Activated CD4-positive, alpha-beta T cell treated with anti-CD3 and anti-CD28 coated beads for 36 hours (primary cell): ENCODE measurements at regions of chr1 and their contacts with region 1.

Region 1: DNA sequence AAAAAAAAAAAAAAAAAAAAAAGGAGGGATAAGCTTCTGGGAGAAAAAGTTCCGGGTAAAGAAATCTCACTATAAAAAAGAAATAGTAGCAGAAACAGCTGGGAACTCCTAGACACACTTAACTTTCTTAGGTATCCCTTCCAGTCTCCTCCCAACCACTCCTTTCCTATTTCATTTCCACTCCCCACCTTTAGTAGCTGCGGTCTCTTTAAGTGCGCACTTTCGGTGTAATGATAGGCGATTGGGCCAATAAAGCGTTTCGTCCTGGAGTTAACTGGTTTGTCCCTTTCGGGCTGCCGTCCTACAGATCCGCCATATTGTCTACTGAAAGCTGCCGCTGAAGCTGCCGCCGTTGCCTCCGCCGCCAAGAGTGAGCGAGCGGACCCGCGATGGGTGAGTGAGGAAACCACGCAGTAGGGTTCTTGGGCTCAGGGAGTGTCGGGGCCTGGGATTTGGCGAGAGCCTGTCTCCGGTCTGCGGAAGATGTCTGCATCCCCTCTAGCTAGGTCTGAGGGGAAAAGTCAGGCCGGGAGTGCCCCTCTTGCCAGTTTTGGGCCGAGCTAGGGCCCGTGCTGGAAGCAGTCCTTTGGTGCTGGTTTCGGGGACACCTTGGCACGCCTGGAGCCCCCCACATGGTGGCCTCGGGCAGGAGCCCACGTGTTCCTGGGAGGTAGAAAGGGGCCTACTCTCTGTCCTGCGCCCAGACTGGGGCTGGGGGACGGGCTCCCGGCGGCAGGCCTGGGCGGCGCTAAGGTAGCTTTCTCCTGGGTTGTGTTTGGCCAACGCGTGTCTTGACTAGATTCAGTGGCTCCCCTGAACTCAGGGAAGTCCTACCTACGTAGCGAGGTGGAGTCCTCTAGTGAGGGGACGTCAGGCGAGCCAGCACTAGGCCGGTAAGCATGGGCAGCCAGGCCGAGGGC is at the start of gene KPNA6:
- DNase-seq: peak; percentile 94
- ATAC-seq: peak; percentile 77
- H3K4me3 Mint-ChIP-seq: peak within 1 kb of the TSS; percentile 88
- H3K27ac Mint-ChIP-seq: peak within 1 kb of the TSS; percentile 96
- H3K4me1 Mint-ChIP-seq: peaks cover 39% of the 10 kb centered on the region
- H3K27me3 Mint-ChIP-seq: no peaks in the 10 kb centered on the region
- total RNA-seq, gene KPNA6: 70.0 to 78.3 TPM

Region 2: DNA sequence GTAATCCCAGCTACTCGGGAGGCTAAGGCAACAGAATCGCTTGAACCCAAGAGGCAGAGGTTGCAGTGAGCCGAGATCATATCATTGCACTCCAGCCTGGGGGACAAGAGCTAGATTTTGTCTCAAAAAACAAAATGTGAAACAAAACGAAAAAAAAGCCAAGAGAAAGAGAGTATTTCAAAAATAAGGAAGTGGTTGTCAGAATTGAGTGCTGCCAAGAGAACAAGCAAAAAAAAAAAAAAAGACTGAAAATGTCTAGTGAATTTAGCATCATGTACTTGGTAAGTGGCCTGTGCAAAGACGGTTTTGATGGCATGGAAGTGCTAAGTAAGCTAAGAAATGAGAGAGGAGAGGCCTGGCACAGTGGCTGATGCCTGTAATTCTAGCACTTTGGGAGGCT is 14.1 kb after region 1 on chr1:
- CTCF ChIA-PET with region 1: interaction called, 62 read pairs
- POLR2A ChIA-PET with region 1: interaction called, 6 read pairs
- intact Hi-C with region 1: no loop called
- DNase-seq: no peak
- ATAC-seq: no peak
- H3K4me3 Mint-ChIP-seq: no peak overlapping the region
- H3K27ac Mint-ChIP-seq: peak overlapping the region; percentile 65
- H3K4me1 Mint-ChIP-seq: peaks cover 46% of the 10 kb centered on the region
- H3K27me3 Mint-ChIP-seq: no peaks in the 10 kb centered on the region

Region 3: GRCh38 chr1:32179443-32180185 is 71.6 kb after region 1 on chr1 and contains the start of gene TXLNA:
- CTCF ChIA-PET with region 1: interaction called, 16 read pairs
- POLR2A ChIA-PET with region 1: interaction called, 5 read pairs
- intact Hi-C with region 1: loop called (anchors 1 to 2 kb)
- DNase-seq: peak; percentile 96
- ATAC-seq: peak; percentile 93
- H3K4me3 Mint-ChIP-seq: peak within 1 kb of the TSS; percentile 86
- H3K27ac Mint-ChIP-seq: peak within 1 kb of the TSS; percentile 98
- H3K4me1 Mint-ChIP-seq: peaks cover 44% of the 10 kb centered on the region
- H3K27me3 Mint-ChIP-seq: no peaks in the 10 kb centered on the region
- total RNA-seq, gene TXLNA: 79.5 to 79.7 TPM

Region 4: GRCh38 chr1:32291708-32292492 is 183.9 kb after region 1 on chr1 and contains the start of gene HDAC1:
- CTCF ChIA-PET with region 1: no interaction called
- POLR2A ChIA-PET with region 1: no interaction called
- intact Hi-C with region 1: loop called in 1 of 2 experiments (anchors 2 kb)
- DNase-seq: peak; percentile 99
- ATAC-seq: peak; percentile 98
- H3K4me3 Mint-ChIP-seq: peak within 1 kb of the TSS; percentile 100
- H3K27ac Mint-ChIP-seq: peak within 1 kb of the TSS; percentile 99
- H3K4me1 Mint-ChIP-seq: peaks cover 43% of the 10 kb centered on the region
- H3K27me3 Mint-ChIP-seq: no peaks in the 10 kb centered on the region
- total RNA-seq, gene HDAC1: 132 to 146 TPM

Region 5: GRCh38 chr1:32386676-32387392 is 278.8 kb after region 1 on chr1:
- CTCF ChIA-PET with region 1: no interaction called
- POLR2A ChIA-PET with region 1: no interaction called
- intact Hi-C with region 1: no loop called
- DNase-seq: no peak
- ATAC-seq: peak; percentile 39
- H3K4me3 Mint-ChIP-seq: no peak overlapping the region
- H3K27ac Mint-ChIP-seq: peak overlapping the region; percentile 7
- H3K4me1 Mint-ChIP-seq: peaks cover 11% of the 10 kb centered on the region
- H3K27me3 Mint-ChIP-seq: no peaks in the 10 kb centered on the region